ENCODE measurements at regions of chr17 and their contacts with region 1.

Region 1: DNA sequence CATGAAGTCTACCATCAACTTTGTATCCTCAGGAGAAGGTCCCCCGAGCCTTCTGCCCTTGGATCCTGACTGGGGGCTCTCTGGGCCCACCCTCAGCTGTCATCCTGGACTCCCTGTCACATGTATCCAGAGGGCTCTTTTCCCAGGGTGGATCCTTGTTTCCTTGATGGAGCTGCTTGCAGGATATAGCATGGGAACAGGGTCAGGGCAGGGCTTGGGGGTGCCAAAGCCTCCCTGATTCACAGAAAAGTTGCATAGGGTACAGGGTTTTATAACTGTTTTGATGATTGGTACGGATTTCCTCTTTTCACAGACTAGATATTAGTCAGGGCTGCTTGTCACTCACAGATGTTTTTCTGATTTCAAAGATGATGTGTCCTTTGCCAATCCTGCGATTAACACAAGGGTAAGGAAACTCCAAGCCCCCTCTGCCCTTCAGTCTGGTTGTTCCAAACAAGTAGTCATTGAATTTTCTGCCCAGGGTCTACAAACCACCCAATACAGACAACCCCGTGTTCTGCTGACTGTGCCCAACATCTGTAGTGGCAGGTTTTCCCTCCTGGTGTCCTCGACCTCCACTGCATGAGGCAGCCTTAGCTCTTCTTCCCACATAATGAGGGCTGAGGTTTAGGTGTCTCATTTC is 20.6 kb upstream of the SLC35G3 start:
- DNase-seq: no peak
- ATAC-seq: no peak
- H3K4me3 ChIP-seq: no peak overlapping the region
- H3K27ac ChIP-seq: no peak overlapping the region
- H3K4me1 ChIP-seq: no peaks in the 10 kb centered on the region
- H3K27me3 ChIP-seq: no peaks in the 10 kb centered on the region
- CTCF ChIP-seq: no peak

Region 2: GRCh38 chr17:35141681-35142466 is 72.9 kb before region 1 on chr17 and contains the start of gene NLE1:
- intact Hi-C with region 1: no loop called
- DNase-seq: peak; percentile 73 to 94 (median 85)
- ATAC-seq: peak; percentile 97 to 100 (median 99)
- H3K4me3 ChIP-seq: peak within 1 kb of the TSS; percentile 85 to 99 (median 94)
- H3K27ac ChIP-seq: no peak within 1 kb of the TSS
- H3K4me1 ChIP-seq: peaks cover 3 to 11% (median 8%) of the 10 kb centered on the region in 3 donors
- H3K27me3 ChIP-seq: no peaks in the 10 kb centered on the region
- CTCF ChIP-seq: peak; percentile 92 to 97 (median 95)
- total RNA-seq, gene NLE1: 10.6 to 32.2 (median 16.9) TPM

Region 3: GRCh38 chr17:35273684-35274083 is 58.9 kb after region 1 on chr17:
- intact Hi-C with region 1: loop called in 1 of 3 experiments (anchors 10 kb)
- DNase-seq: no peak
- ATAC-seq: no peak
- H3K4me3 ChIP-seq: no peak overlapping the region
- H3K27ac ChIP-seq: no peak overlapping the region
- H3K4me1 ChIP-seq: no peaks in the 10 kb centered on the region
- H3K27me3 ChIP-seq: no peaks in the 10 kb centered on the region
- CTCF ChIP-seq: no peak

Region 4: DNA sequence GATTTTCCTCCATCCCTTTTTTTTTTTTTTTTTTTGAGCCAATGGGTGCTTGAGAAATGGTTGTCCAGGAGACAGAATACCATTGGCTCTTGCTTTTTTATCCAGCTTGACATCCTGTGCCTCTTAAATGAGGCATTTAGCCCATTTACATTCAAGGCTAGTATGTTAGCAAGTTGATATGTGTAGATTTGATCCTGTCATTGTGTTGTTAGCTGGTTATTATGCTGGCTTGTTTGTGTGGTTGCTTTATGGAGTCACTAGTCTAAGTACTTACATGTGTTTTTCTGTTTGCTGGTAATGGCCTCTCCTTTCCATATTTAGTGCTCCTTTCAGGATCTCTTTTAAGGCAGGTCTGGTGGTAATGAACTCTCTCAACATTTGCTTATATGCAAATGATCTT is 172.7 kb after region 1 on chr17:
- intact Hi-C with region 1: no loop called
- DNase-seq: no peak
- ATAC-seq: no peak
- H3K4me3 ChIP-seq: no peak overlapping the region
- H3K27ac ChIP-seq: no peak overlapping the region
- H3K4me1 ChIP-seq: no peaks in the 10 kb centered on the region
- H3K27me3 ChIP-seq: no peaks in the 10 kb centered on the region
- CTCF ChIP-seq: no peak